MCF 10A (cell line): ENCODE measurements at regions of chr5 and their contacts with region 1.

Region 1: GRCh38 chr5:120684749-120685415 is 220.8 kb downstream of the PRR16 start:
- DNase-seq: peak; percentile 18
- H3K4me3 Mint-ChIP-seq: no peak overlapping the region
- H3K27ac Mint-ChIP-seq: no peak overlapping the region
- H3K4me1 Mint-ChIP-seq: peaks cover 10% of the 10 kb centered on the region
- H3K27me3 Mint-ChIP-seq: no peaks in the 10 kb centered on the region
- CTCF ChIP-seq: no peak

Region 2: DNA sequence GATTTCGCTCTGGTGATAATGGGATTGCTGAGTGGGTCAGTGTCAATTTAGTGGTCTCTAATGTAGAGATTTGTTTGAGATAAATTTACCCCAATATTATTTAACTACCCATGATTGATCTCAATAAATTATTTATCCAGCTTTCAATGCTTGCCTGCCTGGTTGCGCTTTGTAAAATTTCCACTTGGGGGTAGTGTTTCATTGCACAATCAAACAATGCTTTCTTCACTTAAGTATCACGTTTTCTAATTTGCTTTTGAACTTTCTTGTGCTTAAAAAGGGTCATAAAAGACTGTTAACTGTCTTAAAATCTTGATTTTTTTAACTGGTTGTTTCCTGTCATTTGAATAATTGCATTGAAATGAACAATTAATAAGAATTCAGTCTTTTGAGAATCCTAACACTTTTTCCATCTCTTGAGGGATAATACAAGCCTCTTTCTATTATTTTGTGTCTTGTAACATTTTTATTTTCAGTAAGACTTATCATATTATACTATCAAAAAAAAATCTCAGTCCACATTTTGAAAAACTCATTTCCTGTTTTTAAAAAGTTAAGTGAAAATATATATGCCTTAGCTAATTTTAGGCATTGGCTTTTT is 1213.9 kb before region 1 on chr5:
- CTCF ChIA-PET with region 1: no interaction called
- POLR2A ChIA-PET with region 1: no interaction called
- intact Hi-C with region 1: loop called (anchors 2 kb)
- DNase-seq: peak; percentile 65
- H3K4me3 Mint-ChIP-seq: no peak overlapping the region
- H3K27ac Mint-ChIP-seq: peak overlapping the region; percentile 39
- H3K4me1 Mint-ChIP-seq: no peaks in the 10 kb centered on the region
- H3K27me3 Mint-ChIP-seq: no peaks in the 10 kb centered on the region
- CTCF ChIP-seq: peak; percentile 77

Region 3: DNA sequence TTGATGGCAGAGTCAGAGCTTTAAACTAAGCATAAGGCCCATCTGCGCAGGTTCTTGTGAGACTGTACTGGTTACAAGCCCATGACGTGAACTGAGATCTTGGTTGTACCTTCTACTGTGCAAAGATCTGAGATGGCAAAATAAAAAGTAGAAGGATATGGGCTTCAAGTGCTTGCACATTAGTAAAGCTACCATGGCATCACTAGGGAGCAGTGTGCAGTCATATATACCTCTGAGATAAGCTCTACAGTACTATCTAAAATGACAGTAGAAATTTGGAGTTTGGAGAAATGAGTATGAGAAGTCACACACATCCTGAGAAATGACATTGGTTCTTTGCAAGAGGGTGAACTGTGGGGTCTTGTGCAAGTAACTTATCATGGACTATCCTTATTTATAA is 629.0 kb before region 1 on chr5:
- CTCF ChIA-PET with region 1: no interaction called
- POLR2A ChIA-PET with region 1: no interaction called
- intact Hi-C with region 1: loop called (anchors 1 kb)
- DNase-seq: peak; percentile 65
- H3K4me3 Mint-ChIP-seq: no peak overlapping the region
- H3K27ac Mint-ChIP-seq: no peak overlapping the region
- H3K4me1 Mint-ChIP-seq: no peaks in the 10 kb centered on the region
- H3K27me3 Mint-ChIP-seq: no peaks in the 10 kb centered on the region
- CTCF ChIP-seq: peak; percentile 43

Region 4: DNA sequence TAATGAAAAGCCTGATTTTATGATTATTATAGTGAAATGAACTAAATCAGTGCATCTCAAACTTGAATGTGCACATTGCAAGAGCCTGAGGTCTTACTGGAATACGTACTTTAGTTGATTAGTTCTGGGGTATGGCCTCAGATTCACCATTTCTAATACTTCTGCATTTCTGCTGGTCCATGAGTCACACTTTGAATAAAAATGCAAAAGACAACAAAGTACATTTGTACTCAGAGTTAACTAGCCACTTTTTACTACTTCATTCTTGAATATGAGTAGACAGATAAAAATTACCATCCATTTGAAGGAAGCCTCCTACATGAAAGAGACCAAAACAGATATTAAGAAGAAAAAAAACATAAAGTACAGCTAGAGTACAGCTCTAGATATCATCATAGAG is 247.9 kb before region 1 on chr5:
- CTCF ChIA-PET with region 1: no interaction called
- POLR2A ChIA-PET with region 1: no interaction called
- intact Hi-C with region 1: no loop called
- DNase-seq: no peak
- H3K4me3 Mint-ChIP-seq: no peak overlapping the region
- H3K27ac Mint-ChIP-seq: no peak overlapping the region
- H3K4me1 Mint-ChIP-seq: peaks cover 6% of the 10 kb centered on the region
- H3K27me3 Mint-ChIP-seq: no peaks in the 10 kb centered on the region
- CTCF ChIP-seq: no peak

Region 5: DNA sequence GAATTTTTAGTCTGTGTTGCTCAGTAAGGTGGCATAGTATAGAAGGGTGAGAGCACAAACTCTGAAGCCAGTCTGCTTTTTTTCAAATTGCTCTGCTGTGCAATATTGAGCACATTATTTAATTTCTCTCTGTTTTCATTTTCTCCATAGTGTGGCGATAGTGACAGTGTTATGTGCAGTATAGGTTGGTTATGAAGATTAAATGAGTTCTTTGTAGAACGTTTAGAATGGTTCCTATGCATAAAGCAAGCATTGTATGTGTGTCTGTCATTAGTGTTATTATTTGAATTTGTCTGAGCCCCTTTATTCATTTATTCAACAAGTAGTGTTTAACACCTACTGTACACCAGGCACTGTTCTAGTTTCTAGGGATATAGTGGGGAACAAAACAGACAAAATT is 211.6 kb before region 1 on chr5:
- CTCF ChIA-PET with region 1: no interaction called
- POLR2A ChIA-PET with region 1: no interaction called
- intact Hi-C with region 1: loop called (anchors 1 kb)
- DNase-seq: no peak
- H3K4me3 Mint-ChIP-seq: no peak overlapping the region
- H3K27ac Mint-ChIP-seq: no peak overlapping the region
- H3K4me1 Mint-ChIP-seq: peaks cover 13% of the 10 kb centered on the region
- H3K27me3 Mint-ChIP-seq: no peaks in the 10 kb centered on the region
- CTCF ChIP-seq: no peak

Region 6: DNA sequence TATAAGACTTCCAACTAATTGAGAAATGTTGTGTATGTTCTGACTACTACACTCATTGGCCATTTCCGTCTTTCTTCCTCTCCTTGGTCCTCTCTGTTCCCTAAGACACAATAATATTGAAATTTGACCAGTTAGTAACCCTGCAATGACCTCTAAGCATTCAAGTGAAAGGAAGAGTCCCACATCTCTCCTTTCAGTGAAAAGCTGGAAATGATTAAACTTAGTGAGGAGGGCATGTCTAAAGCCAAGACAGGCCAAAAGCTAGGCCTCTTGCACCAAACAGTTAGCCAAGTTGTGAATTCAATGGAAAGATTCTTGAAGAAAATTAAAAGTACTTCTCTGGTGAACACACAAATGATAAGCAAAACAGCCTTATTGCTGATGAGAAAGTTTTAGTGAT is 98.2 kb before region 1 on chr5:
- CTCF ChIA-PET with region 1: no interaction called
- POLR2A ChIA-PET with region 1: no interaction called
- intact Hi-C with region 1: no loop called
- DNase-seq: no peak
- H3K4me3 Mint-ChIP-seq: no peak overlapping the region
- H3K27ac Mint-ChIP-seq: no peak overlapping the region
- H3K4me1 Mint-ChIP-seq: no peaks in the 10 kb centered on the region
- H3K27me3 Mint-ChIP-seq: no peaks in the 10 kb centered on the region
- CTCF ChIP-seq: no peak

Region 7: GRCh38 chr5:120614531-120615180 is 70.2 kb before region 1 on chr5:
- CTCF ChIA-PET with region 1: interaction called, 4 read pairs
- POLR2A ChIA-PET with region 1: no interaction called
- intact Hi-C with region 1: loop called (anchors 2 kb)
- DNase-seq: peak; percentile 49
- H3K4me3 Mint-ChIP-seq: peak overlapping the region; percentile 43
- H3K27ac Mint-ChIP-seq: peak overlapping the region; percentile 93
- H3K4me1 Mint-ChIP-seq: peaks cover 41% of the 10 kb centered on the region
- H3K27me3 Mint-ChIP-seq: no peaks in the 10 kb centered on the region
- CTCF ChIP-seq: no peak

Region 8: DNA sequence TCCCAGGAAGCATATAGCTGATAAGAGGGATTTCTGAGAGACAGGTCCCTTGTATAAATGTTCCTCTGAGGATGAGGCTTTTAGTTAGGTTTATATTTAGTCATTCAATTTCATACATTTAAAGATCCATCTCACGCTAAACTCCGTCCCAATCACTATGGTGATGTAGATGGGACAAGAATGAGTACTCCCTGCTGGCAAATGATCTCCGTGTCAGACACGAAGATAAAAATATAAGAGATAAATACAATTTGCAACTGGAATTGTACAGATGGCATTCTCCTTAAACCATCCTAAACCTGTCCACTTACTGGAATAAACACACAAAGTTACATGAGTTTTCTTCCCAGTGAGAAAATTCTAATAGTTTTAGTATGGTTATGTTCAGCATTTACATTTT is 12.3 kb after region 1 on chr5:
- CTCF ChIA-PET with region 1: no interaction called
- POLR2A ChIA-PET with region 1: no interaction called
- intact Hi-C with region 1: no loop called
- DNase-seq: no peak
- H3K4me3 Mint-ChIP-seq: no peak overlapping the region
- H3K27ac Mint-ChIP-seq: no peak overlapping the region
- H3K4me1 Mint-ChIP-seq: peaks cover 15% of the 10 kb centered on the region
- H3K27me3 Mint-ChIP-seq: no peaks in the 10 kb centered on the region
- CTCF ChIP-seq: no peak